ENCODE measurements at regions of chr1 and their contacts with region 1.

Region 1: DNA sequence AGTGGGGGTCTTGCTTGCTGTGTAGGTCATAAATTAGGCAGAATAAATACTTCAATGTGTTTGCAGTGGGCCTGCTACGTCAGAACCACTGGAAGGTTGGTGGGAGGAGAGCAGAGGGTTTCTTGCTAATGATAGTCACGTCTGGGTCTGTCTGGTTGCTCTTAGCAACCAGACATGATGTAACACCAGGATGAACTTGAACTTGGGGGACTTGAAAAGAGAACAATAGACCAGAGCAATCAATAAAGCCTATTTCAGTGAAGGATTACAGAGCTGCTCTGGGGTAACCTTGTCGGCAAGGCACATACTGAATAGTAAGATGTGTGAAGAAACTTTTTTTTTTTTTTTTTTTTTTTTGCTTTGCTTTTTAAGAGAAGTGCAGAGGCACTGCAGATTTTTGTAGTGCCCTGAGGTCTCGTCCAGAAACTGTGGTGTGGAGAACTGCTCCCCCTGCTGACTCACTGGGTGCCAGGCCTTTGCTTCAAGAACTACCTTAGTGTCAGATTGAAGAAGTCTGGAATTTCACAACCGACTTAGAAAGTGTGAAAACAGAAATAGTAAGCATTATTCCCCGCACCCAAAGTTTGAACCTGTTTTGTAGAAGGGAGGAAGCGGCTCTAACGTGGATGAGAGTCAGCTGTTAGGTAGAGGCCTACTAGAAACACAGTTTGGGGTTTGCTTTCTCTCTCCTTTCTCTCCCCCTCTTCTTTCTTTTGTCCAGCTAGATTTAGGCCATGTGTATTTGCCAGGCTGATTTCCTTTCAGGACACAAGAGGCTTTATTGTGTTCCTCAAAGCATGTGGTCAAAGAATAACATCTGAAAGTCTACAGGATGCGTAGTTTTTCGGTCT is 271.6 kb downstream of the TM2D1 start:
- DNase-seq: peak; percentile 93
- H3K4me3 ChIP-seq: no peak overlapping the region
- CTCF ChIP-seq: peak; percentile 92

Region 2: GRCh38 chr1:61077676-61078541 is 375.4 kb before region 1 on chr1:
- in situ Hi-C with region 1: loop called (anchors 25 kb)
- DNase-seq: peak; percentile 100
- H3K4me3 ChIP-seq: peak overlapping the region; percentile 56
- CTCF ChIP-seq: no peak

Measured in astrocyte of the cerebellum (primary cell).